ENCODE measurements at regions of chr1 and their contacts with region 1.

Region 1: DNA sequence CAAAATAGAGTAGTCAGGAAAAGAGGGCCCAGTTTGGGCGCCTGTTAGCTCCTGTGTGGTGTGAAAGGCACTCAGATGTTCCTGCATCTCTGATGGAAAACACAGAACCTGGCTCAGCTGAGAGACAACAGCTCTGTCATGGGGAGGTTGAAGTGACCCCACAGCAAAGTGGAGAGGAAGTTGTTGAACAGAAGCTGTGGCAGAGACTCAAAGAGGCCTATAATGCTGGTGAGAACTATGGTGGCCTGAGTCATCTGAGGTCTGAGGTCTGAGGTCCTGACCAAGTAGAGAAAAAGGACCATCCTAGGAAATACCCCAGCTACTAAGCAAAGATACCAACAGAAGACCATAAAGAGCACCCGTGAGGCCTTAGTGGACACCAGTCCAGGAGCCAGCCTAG is 45.6 kb upstream of the JAK1 start:
- DNase-seq: no peak
- H3K4me3 ChIP-seq: no peak overlapping the region
- H3K27ac ChIP-seq: no peak overlapping the region
- H3K4me1 ChIP-seq: peaks cover 10% of the 10 kb centered on the region
- CTCF ChIP-seq: no peak

Region 2: GRCh38 chr1:64980745-64981600 is 31.0 kb before region 1 on chr1:
- CTCF ChIA-PET with region 1: no interaction called
- POLR2A ChIA-PET with region 1: interaction called, 3 read pairs
- intact Hi-C with region 1: loop called (anchors 1 kb)
- DNase-seq: no peak
- H3K4me3 ChIP-seq: no peak overlapping the region
- H3K27ac ChIP-seq: no peak overlapping the region
- H3K4me1 ChIP-seq: no peaks in the 10 kb centered on the region
- CTCF ChIP-seq: no peak

Measured in OCI-LY7 (cell line).